Tibial artery (tissue), 4 donors: ENCODE measurements at regions of chr13 and their contacts with region 1.

Region 1: DNA sequence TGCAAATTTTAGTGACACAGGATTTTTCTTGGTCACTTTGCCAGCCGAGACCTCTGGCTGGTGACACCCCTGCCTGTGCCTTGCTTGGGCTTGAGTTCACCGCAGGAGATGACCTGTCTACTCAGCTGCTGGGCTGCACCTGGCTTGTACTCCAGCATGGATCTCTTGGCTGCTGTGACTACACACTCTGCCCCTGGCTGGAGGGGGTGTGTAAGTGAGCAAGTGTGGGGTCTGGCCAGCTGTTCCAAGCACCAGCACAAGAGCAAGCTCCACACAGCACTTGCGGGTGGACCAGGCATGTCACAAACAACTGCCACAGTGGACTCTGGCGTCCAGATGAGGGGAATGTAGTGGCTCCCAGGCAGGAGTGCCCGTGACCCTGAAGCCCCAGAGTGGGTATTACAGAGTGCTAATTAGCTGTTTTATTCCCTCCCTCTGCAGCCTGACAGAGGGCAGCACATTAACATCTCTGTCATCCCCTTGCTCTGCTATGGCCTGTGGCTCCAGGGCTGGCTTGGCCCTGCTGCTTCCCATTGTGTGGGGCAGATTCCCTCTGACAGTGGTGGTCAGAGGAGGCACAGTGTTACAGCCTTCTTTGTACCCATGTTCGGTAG is 1387.2 kb downstream of the OLFM4 start:
- DNase-seq: no peak
- H3K4me3 ChIP-seq: no peak overlapping the region
- H3K27ac ChIP-seq: no peak overlapping the region
- H3K4me1 ChIP-seq: no peaks in the 10 kb centered on the region
- H3K27me3 ChIP-seq: no peaks in the 10 kb centered on the region
- CTCF ChIP-seq: no peak

Region 2: DNA sequence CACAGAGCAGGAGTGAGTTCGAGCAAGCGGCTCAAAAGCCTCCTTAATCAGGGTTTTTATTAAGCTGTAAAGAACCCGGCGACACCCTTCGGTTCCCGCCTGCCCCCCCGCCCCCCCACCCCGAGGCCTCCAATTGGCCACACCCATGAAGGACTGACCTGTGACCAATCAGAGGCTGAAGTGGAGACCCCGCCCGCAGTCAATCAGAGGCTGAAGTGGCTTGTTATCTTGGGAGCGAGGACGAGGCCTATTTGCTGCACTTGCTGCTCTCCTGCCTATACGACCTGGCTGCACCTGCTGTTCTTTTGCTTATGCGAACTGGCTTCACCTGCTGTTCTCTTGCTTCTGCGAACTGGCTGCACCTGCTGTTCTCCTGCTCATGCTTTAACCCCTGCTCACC is 542.3 kb before region 1 on chr13:
- intact Hi-C with region 1: no loop called
- DNase-seq: no peak
- H3K4me3 ChIP-seq: no peak overlapping the region
- H3K27ac ChIP-seq: no peak overlapping the region
- H3K4me1 ChIP-seq: no peaks in the 10 kb centered on the region
- H3K27me3 ChIP-seq: no peaks in the 10 kb centered on the region
- CTCF ChIP-seq: no peak

Region 3: DNA sequence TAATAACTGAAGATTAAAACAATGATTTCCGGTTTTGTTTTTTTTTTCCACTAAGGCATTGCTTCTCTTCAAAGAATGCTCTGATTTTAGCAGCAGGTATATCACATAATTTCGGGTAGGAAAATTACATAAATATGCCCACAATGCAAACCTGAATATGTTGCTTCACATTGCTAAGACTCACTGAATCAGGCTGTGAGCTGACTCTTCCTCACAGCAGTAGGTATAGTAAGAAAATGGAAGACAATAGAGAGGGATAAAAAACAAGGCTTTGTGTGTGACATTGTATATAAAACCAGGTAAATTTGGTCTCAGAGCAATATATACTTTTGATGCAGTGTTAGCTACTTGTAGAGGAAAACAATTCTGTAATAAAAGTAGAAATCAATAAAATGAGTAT is 32.3 kb before region 1 on chr13:
- intact Hi-C with region 1: loop called (anchors 2 kb)
- DNase-seq: no peak
- H3K4me3 ChIP-seq: no peak overlapping the region
- H3K27ac ChIP-seq: no peak overlapping the region
- H3K4me1 ChIP-seq: no peaks in the 10 kb centered on the region
- H3K27me3 ChIP-seq: no peaks in the 10 kb centered on the region
- CTCF ChIP-seq: no peak